ENCODE measurements at regions of chr2 and their contacts with region 1.

Region 1: DNA sequence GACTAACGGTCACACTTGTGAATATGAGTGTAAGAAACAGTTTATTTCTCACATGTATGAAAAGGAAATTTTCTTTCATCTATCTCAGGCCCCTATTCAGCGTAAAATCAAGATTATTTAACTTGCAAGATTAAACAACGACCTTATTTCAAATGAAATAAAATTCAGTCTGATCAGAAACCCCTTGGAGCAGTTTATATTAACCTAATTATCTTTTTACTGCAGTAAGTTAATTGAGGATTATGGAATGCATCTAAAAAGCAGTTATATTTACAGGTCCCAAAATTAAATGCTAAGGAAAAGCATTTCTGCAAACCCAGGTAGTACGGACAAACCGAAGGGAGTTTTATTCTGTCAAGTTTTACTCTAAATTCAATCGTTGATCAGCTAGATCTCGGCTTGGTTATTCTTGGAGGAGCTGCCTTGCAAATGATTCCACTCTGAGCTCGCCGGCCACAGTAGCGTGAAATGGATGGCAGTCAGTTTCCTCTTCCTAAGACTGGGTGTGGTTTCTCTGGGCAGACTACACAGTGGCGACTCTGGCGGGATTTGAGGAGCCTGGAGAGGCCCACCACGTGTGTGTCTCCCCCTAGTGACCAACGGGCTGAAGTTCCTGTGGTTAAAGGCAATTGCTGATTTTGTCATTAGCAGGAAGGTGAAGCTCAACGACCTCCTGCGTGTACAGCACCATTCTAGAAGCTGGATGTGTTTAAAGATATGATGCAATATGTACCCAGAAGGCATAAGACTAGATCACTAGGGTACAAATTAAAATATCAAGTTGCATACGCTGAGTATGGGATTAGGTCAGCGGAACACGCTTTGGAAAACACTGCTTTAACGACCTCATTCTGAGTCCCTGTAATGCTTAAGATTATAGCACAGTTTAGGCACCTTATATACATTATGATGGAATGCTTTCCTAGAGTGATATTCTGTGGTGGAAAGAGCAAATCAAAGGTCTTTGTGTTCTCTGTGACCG is 36.4 kb downstream of the PRKRA start:
- DNase-seq: peak; percentile 88 to 89
- H3K4me3 ChIP-seq: peak overlapping the region; percentile 35; the same call in 1 of the 2 replicates
- H3K4me3 Mint-ChIP-seq: peak overlapping the region; percentile 73
- H3K27ac Mint-ChIP-seq: no peak overlapping the region
- H3K4me1 ChIP-seq: no peaks in the 10 kb centered on the region
- H3K4me1 Mint-ChIP-seq: peaks cover 3% of the 10 kb centered on the region
- H3K27me3 ChIP-seq: no peaks in the 10 kb centered on the region
- H3K27me3 Mint-ChIP-seq: no peaks in the 10 kb centered on the region
- CTCF ChIP-seq: peak; percentile 87 to 95

Region 2: DNA sequence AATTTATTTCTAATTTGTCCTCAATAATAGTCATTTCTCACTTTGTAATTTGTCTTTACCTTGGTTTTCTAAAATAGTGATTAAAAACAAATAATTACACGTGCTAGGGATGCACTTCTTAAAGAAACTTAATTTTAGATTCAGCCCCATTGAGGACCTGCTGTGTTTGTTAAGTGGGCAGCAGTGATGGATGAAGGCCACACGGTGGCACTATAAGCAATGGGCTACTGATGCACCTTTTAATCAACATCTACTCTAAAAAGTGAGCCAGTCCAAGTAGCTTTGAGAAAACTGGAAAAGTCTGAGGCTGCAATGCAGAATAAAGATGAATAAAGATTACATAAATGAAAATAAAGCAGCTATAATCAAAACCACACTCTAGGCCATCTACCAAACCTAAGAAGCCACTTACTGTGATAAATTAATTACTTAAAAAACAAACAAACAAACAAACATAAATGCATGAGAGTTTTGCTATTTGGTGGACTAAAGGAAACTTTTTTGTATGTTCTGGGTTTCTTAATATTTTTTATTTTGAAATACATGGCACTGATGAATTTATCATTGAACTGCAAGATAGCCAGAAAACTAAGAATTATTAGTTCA is 431.3 kb before region 1 on chr2:
- CTCF ChIA-PET with region 1: no interaction called
- POLR2A ChIA-PET with region 1: no interaction called
- intact Hi-C with region 1: loop called (anchors 10 kb)
- DNase-seq: peak; percentile 35 to 48
- H3K4me3 ChIP-seq: no peak overlapping the region
- H3K4me3 Mint-ChIP-seq: no peak overlapping the region
- H3K27ac Mint-ChIP-seq: no peak overlapping the region
- H3K4me1 ChIP-seq: no peaks in the 10 kb centered on the region
- H3K4me1 Mint-ChIP-seq: no peaks in the 10 kb centered on the region
- H3K27me3 ChIP-seq: no peaks in the 10 kb centered on the region; the same call in 1 of the 2 replicates
- H3K27me3 Mint-ChIP-seq: peaks cover 6% of the 10 kb centered on the region
- CTCF ChIP-seq: peak; percentile 79 to 86

Region 3: GRCh38 chr2:178112202-178113152 is 302.1 kb before region 1 on chr2 and contains the start of gene RBM45:
- CTCF ChIA-PET with region 1: interaction called, 10 read pairs
- POLR2A ChIA-PET with region 1: no interaction called
- intact Hi-C with region 1: loop called (anchors 1 kb)
- DNase-seq: peak; percentile 92 to 95
- H3K4me3 ChIP-seq: peak within 1 kb of the TSS; percentile 98
- H3K4me3 Mint-ChIP-seq: peak within 1 kb of the TSS; percentile 94
- H3K27ac Mint-ChIP-seq: peak within 1 kb of the TSS; percentile 80
- H3K4me1 ChIP-seq: 0 out of 2 replicates have a peak, but pooled peaks cover 6% of the 10 kb centered on the region
- H3K4me1 Mint-ChIP-seq: peaks cover 6% of the 10 kb centered on the region
- H3K27me3 ChIP-seq: no peaks in the 10 kb centered on the region
- H3K27me3 Mint-ChIP-seq: no peaks in the 10 kb centered on the region
- CTCF ChIP-seq: peak; percentile 96 to 99
- total RNA-seq, gene RBM45: 13.4 and 13.6 TPM in 2 replicates

Region 4: DNA sequence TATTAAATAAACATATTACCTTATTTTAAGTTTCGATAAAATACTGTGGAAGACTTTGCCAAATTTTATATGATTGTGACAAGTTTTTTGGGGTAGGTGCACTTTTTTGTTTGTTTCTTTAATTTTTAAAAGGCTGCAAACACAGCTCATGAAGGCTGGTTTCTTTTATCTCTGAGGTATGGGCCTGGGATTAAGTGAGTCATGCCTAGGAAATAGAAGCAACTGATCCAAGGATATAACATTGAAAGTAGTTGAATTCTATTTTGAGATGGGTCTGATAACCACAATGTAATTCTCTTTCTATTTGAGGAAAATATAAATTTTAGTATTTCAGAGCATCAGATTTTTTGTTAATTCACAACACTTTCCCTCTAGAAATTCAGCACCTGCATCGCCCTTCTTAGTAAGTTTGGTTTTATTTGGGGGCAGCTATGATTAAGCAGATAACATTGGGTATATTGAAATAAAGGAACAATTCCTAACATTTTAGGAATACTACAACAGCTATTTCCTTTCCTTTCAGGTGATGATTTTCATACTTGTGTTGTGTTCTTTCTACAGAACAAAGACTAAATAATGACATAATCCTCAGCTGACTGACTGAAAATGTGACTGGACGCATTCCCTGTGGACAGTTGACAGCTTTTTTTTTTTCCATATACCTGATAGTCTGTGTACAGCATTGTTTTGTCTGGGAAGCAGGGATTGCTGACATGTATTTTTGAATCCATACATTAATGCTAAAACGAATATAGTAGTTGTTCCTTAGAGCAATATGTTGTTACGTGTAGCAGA is 285.5 kb before region 1 on chr2:
- CTCF ChIA-PET with region 1: interaction called, 8 read pairs
- POLR2A ChIA-PET with region 1: no interaction called
- intact Hi-C with region 1: loop called (anchors 1 kb)
- DNase-seq: no peak
- H3K4me3 ChIP-seq: no peak overlapping the region
- H3K4me3 Mint-ChIP-seq: no peak overlapping the region
- H3K27ac Mint-ChIP-seq: no peak overlapping the region
- H3K4me1 ChIP-seq: 0 out of 2 replicates have a peak, but pooled peaks cover 5% of the 10 kb centered on the region
- H3K4me1 Mint-ChIP-seq: peaks cover 9% of the 10 kb centered on the region
- H3K27me3 ChIP-seq: no peaks in the 10 kb centered on the region
- H3K27me3 Mint-ChIP-seq: no peaks in the 10 kb centered on the region
- CTCF ChIP-seq: no peak

Region 5: GRCh38 chr2:178193823-178194599 is 220.5 kb before region 1 on chr2 and contains the start of gene OSBPL6:
- CTCF ChIA-PET with region 1: no interaction called
- POLR2A ChIA-PET with region 1: no interaction called
- intact Hi-C with region 1: loop called (anchors 1 kb)
- DNase-seq: peak; percentile 66 to 85
- H3K4me3 ChIP-seq: peak within 1 kb of the TSS; percentile 70
- H3K4me3 Mint-ChIP-seq: peak within 1 kb of the TSS; percentile 76
- H3K27ac Mint-ChIP-seq: no peak within 1 kb of the TSS
- H3K4me1 ChIP-seq: peaks cover 10% of the 10 kb centered on the region; the same call in 1 of the 2 replicates
- H3K4me1 Mint-ChIP-seq: no peaks in the 10 kb centered on the region
- H3K27me3 ChIP-seq: peaks cover 6% of the 10 kb centered on the region
- H3K27me3 Mint-ChIP-seq: peaks cover 22% of the 10 kb centered on the region
- CTCF ChIP-seq: no peak
- total RNA-seq, gene OSBPL6: 1.0 and 1.5 TPM in 2 replicates

Region 6: GRCh38 chr2:178306352-178307073 is 108.0 kb before region 1 on chr2:
- CTCF ChIA-PET with region 1: interaction called, 5 read pairs
- POLR2A ChIA-PET with region 1: no interaction called
- intact Hi-C with region 1: loop called (anchors 1 kb)
- DNase-seq: peak; percentile 69 to 73
- H3K4me3 ChIP-seq: no peak overlapping the region
- H3K4me3 Mint-ChIP-seq: no peak overlapping the region
- H3K27ac Mint-ChIP-seq: no peak overlapping the region
- H3K4me1 ChIP-seq: no peaks in the 10 kb centered on the region
- H3K4me1 Mint-ChIP-seq: no peaks in the 10 kb centered on the region
- H3K27me3 ChIP-seq: no peaks in the 10 kb centered on the region
- H3K27me3 Mint-ChIP-seq: no peaks in the 10 kb centered on the region
- CTCF ChIP-seq: peak; percentile 80 to 89

Region 7: GRCh38 chr2:178397002-178397605 is 17.5 kb before region 1 on chr2:
- CTCF ChIA-PET with region 1: interaction called, 9 read pairs
- POLR2A ChIA-PET with region 1: no interaction called
- intact Hi-C with region 1: loop called (anchors 1 kb)
- DNase-seq: peak in 1 of 2 experiments; percentile 16
- H3K4me3 ChIP-seq: no peak overlapping the region
- H3K4me3 Mint-ChIP-seq: no peak overlapping the region
- H3K27ac Mint-ChIP-seq: no peak overlapping the region
- H3K4me1 ChIP-seq: peaks cover 7% of the 10 kb centered on the region
- H3K4me1 Mint-ChIP-seq: peaks cover 22% of the 10 kb centered on the region
- H3K27me3 ChIP-seq: no peaks in the 10 kb centered on the region
- H3K27me3 Mint-ChIP-seq: no peaks in the 10 kb centered on the region
- CTCF ChIP-seq: peak; percentile 55 to 56